Activated naive CD8-positive, alpha-beta T cell treated with anti-CD3 and anti-CD28 coated beads, Interleukin-2, amount 10 ng/mL, durations not matched to agents 7 days and 5 days (primary cell): ENCODE measurements at regions of chr2 and their contacts with region 1.

Region 1: DNA sequence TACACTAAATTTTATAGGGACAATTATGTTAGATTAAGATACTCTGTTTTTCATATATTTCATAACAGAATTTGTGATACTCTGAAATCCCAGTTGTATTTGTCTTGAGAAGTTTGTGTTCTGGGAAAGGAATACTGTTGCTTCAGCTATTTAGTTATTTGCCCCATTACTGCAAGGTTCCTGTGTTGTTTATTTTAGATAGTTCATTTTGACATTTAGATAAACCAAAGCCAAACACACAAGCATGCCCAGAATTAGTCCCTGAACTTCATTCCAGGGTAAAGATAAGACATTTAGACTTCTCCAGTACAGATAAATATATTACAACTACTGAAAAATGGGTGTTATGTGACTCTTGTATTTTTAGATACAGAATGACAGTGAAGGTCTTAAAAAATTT is 74.7 kb downstream of the BMPR2 start:
- DNase-seq: no peak
- ATAC-seq: no peak
- H3K4me3 Mint-ChIP-seq: no peak overlapping the region
- H3K27ac Mint-ChIP-seq: no peak overlapping the region
- H3K4me1 Mint-ChIP-seq: no peaks in the 10 kb centered on the region
- H3K27me3 Mint-ChIP-seq: no peaks in the 10 kb centered on the region

Region 2: GRCh38 chr2:202479090-202479489 is 28.3 kb after region 1 on chr2:
- POLR2A ChIA-PET with region 1: no interaction called
- DNase-seq: no peak
- ATAC-seq: no peak
- H3K4me3 Mint-ChIP-seq: no peak overlapping the region
- H3K27ac Mint-ChIP-seq: no peak overlapping the region
- H3K4me1 Mint-ChIP-seq: peaks cover 3% of the 10 kb centered on the region
- H3K27me3 Mint-ChIP-seq: no peaks in the 10 kb centered on the region

Region 3: GRCh38 chr2:203019142-203019541 is 568.4 kb after region 1 on chr2:
- POLR2A ChIA-PET with region 1: interaction called, 11 read pairs
- DNase-seq: no peak
- ATAC-seq: no peak
- H3K4me3 Mint-ChIP-seq: no peak overlapping the region
- H3K27ac Mint-ChIP-seq: no peak overlapping the region
- H3K4me1 Mint-ChIP-seq: peaks cover 31% of the 10 kb centered on the region
- H3K27me3 Mint-ChIP-seq: no peaks in the 10 kb centered on the region